Natural killer cell (primary cell): ENCODE measurements at regions of chr1 and their contacts with region 1.

Region 1: GRCh38 chr1:86470859-86471258 is 2.1 kb downstream of the CLCA1 start:
- DNase-seq: no peak
- ATAC-seq: no peak
- H3K4me3 ChIP-seq: no peak overlapping the region
- H3K4me3 Mint-ChIP-seq: no peak overlapping the region
- H3K27ac ChIP-seq: no peak overlapping the region
- H3K27ac Mint-ChIP-seq: no peak overlapping the region
- H3K4me1 ChIP-seq: no peaks in the 10 kb centered on the region
- H3K4me1 Mint-ChIP-seq: no peaks in the 10 kb centered on the region
- H3K27me3 ChIP-seq: peaks cover 3% of the 10 kb centered on the region
- H3K27me3 Mint-ChIP-seq: peaks cover 18 to 22% of the 10 kb centered on the region in 2 donors
- CTCF ChIP-seq: no peak

Region 2: DNA sequence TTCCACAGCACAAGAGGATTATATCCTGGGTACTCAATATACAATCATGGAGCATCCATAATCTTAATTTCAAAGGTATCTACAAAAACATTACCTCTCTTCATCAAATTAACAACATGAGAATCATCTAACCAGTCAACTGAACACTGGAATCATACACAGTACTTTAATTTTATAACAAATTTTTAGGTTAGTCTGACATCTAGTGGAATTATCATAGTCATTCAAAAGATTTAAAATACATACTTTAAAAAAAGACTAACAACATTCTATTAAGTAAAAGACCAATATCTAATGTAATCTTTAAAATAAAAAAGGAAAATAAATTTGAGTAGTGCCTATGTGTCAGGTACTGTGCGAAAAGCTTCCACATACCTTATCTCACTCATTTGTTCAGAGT is 216.7 kb after region 1 on chr1:
- intact Hi-C with region 1: loop called (anchors 5 kb)
- DNase-seq: no peak
- ATAC-seq: peak in 2 of 3 donors; percentile 49 to 50
- H3K4me3 ChIP-seq: no peak overlapping the region
- H3K4me3 Mint-ChIP-seq: no peak overlapping the region
- H3K27ac ChIP-seq: no peak overlapping the region
- H3K27ac Mint-ChIP-seq: no peak overlapping the region
- H3K4me1 ChIP-seq: no peaks in the 10 kb centered on the region
- H3K4me1 Mint-ChIP-seq: no peaks in the 10 kb centered on the region
- H3K27me3 ChIP-seq: no peaks in the 10 kb centered on the region
- H3K27me3 Mint-ChIP-seq: no peaks in the 10 kb centered on the region
- CTCF ChIP-seq: peak; percentile 49

Region 3: DNA sequence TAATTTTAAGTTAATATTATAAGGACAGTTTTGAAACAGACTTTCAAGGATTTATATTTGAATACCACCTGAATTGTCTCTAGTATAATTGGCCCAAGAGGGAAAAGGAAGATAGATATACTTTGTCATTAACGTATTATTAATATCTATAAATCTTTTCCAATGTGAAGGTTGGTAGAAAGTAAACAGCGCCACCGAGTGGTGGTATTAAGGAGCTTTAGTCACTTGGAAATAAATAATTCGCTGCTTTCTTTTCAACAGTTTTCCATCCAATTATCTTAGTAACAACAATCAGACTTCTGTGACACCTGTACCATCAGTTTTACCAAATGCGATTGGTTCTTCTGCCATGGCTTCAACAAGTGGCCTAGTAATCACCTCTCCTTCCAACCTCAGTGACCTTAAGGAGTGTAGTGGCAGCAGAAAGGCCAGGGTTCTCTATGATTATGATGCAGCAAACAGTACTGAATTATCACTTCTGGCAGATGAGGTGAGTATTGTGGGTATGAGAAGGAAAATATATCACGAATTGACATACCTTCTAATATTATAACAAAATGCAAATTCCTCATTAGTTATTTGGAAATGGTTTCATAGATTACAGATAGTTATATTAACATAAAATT is 271.2 kb after region 1 on chr1:
- intact Hi-C with region 1: loop called (anchors 10 kb)
- DNase-seq: peak in 1 of 2 donors; percentile 77
- ATAC-seq: no peak
- H3K4me3 ChIP-seq: no peak overlapping the region
- H3K4me3 Mint-ChIP-seq: no peak overlapping the region
- H3K27ac ChIP-seq: no peak overlapping the region
- H3K27ac Mint-ChIP-seq: no peak overlapping the region
- H3K4me1 ChIP-seq: peaks cover 5% of the 10 kb centered on the region
- H3K4me1 Mint-ChIP-seq: peaks cover 0 to 12% of the 10 kb centered on the region in 2 donors
- H3K27me3 ChIP-seq: no peaks in the 10 kb centered on the region
- H3K27me3 Mint-ChIP-seq: no peaks in the 10 kb centered on the region
- CTCF ChIP-seq: peak; percentile 80